ENCODE measurements at regions of chr1 and their contacts with region 1.

Region 1: GRCh38 chr1:210400043-210400840 is 71.5 kb downstream of the HHAT start:
- DNase-seq: peak; percentile 76
- ATAC-seq: peak; percentile 79
- H3K4me3 Mint-ChIP-seq: no peak overlapping the region
- H3K27ac Mint-ChIP-seq: peak overlapping the region; percentile 94
- H3K4me1 Mint-ChIP-seq: peaks cover 44% of the 10 kb centered on the region
- H3K27me3 Mint-ChIP-seq: peaks cover 8% of the 10 kb centered on the region

Region 2: DNA sequence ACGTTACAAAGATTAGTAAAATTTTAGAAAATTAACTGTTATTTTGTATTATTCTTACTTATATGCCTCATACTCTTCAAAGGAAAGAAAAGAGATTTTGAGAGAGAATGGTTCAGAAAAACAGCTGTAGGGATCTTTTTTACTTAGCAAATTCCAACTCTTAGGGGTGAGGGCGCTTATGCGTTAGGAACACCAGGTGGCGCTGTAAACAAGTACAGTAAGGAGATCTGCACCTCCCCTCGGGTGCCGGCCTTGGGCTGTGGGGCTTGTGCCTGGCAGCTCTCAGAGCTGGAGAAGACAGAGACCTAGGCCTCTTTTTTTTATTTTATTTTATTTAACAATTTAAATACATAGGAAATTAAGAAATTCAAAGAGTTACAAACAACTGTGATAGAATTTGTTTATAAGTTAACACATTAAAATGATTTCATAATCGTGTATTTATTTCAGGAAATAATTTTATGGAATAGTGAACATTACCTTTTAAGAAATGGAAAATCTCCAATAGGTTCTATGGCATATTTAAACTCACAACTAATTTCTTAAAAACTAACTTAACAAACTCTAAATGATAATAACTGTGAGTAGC is 539.9 kb before region 1 on chr1:
- CTCF ChIA-PET with region 1: interaction called, 4 read pairs
- POLR2A ChIA-PET with region 1: no interaction called
- intact Hi-C with region 1: loop called (anchors 1 kb)
- DNase-seq: peak; percentile 86
- ATAC-seq: peak; percentile 95
- H3K4me3 Mint-ChIP-seq: no peak overlapping the region
- H3K27ac Mint-ChIP-seq: no peak overlapping the region
- H3K4me1 Mint-ChIP-seq: no peaks in the 10 kb centered on the region
- H3K27me3 Mint-ChIP-seq: peaks cover 4% of the 10 kb centered on the region

Region 3: GRCh38 chr1:210239349-210240111 is 160.7 kb before region 1 on chr1:
- CTCF ChIA-PET with region 1: no interaction called
- POLR2A ChIA-PET with region 1: no interaction called
- intact Hi-C with region 1: loop called in 1 of 2 experiments (anchors 5 kb)
- DNase-seq: no peak
- ATAC-seq: no peak
- H3K4me3 Mint-ChIP-seq: no peak overlapping the region
- H3K27ac Mint-ChIP-seq: no peak overlapping the region
- H3K4me1 Mint-ChIP-seq: peaks cover under 1% of the 10 kb centered on the region
- H3K27me3 Mint-ChIP-seq: peaks cover 63% of the 10 kb centered on the region

Region 4: DNA sequence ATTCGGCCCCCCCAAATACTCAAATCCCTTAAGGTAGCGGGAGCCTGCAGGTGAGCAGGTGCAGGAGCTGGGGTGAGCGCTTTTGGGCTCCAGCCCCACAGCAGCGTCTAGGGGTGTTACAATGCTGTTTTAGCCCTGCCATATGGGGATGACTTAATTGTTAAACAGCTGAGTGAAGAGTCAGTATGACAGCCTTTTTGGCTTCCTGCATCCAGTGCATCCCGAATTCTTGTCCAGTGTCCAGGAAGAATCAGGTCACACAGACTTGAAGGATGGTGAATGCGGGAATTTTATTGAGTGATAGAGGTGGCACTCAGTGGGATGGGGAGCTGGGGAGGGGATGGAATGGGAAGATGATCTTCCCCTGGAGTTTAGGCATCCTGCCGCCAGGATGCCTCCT is 101.9 kb before region 1 on chr1:
- CTCF ChIA-PET with region 1: no interaction called
- POLR2A ChIA-PET with region 1: no interaction called
- intact Hi-C with region 1: no loop called
- DNase-seq: no peak
- ATAC-seq: no peak
- H3K4me3 Mint-ChIP-seq: no peak overlapping the region
- H3K27ac Mint-ChIP-seq: no peak overlapping the region
- H3K4me1 Mint-ChIP-seq: no peaks in the 10 kb centered on the region
- H3K27me3 Mint-ChIP-seq: peaks cover 32% of the 10 kb centered on the region

Region 5: GRCh38 chr1:210311726-210312493 is 88.3 kb before region 1 on chr1:
- CTCF ChIA-PET with region 1: no interaction called
- POLR2A ChIA-PET with region 1: no interaction called
- intact Hi-C with region 1: loop called in 1 of 2 experiments (anchors 1 kb)
- DNase-seq: no peak
- ATAC-seq: no peak
- H3K4me3 Mint-ChIP-seq: peak overlapping the region; percentile 68
- H3K27ac Mint-ChIP-seq: peak overlapping the region; percentile 10
- H3K4me1 Mint-ChIP-seq: peaks cover 6% of the 10 kb centered on the region
- H3K27me3 Mint-ChIP-seq: peaks cover 17% of the 10 kb centered on the region

Region 6: GRCh38 chr1:210342986-210343780 is 57.1 kb before region 1 on chr1:
- CTCF ChIA-PET with region 1: interaction called, 3 read pairs
- POLR2A ChIA-PET with region 1: no interaction called
- intact Hi-C with region 1: loop called (anchors 2 kb)
- DNase-seq: no peak
- ATAC-seq: peak; percentile 50
- H3K4me3 Mint-ChIP-seq: no peak overlapping the region
- H3K27ac Mint-ChIP-seq: no peak overlapping the region
- H3K4me1 Mint-ChIP-seq: peaks cover 37% of the 10 kb centered on the region
- H3K27me3 Mint-ChIP-seq: no peaks in the 10 kb centered on the region

Region 7: DNA sequence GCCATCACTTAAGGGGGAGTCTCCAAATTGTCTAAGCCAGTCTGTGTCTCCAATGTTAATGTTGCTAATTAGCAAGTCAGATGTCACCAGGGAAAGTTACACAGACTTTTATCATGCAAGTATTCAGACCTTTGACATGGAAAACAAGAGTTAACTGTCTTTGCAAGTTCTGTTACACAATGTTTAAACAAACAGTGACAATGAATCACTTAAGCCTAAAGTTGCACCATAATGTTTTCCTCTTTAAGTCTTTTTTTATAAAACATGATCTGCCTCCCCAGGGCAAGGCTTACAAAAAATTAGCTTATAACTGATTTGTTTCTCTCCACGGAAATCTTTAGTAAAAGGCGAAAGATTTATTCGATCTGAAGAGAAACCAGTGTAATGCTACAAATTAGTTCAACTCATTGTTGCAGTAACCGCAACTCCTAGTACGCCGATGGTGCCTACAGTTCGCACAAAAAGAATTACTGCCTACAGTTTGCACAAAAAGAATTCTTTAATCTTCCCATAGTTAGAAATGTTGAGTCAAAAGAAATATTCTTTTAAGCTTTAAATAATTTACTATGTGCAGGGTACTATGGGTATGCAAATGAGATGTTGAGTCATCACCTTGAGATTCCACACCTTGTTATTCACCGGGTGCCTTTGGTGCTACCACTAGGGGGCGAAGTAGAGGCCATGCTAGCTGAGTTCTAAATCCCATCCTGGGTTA is 26.2 kb before region 1 on chr1:
- CTCF ChIA-PET with region 1: interaction called, 44 read pairs
- POLR2A ChIA-PET with region 1: interaction called, 21 read pairs
- intact Hi-C with region 1: loop called (anchors 1 kb)
- DNase-seq: peak; percentile 90
- ATAC-seq: peak; percentile 82
- H3K4me3 Mint-ChIP-seq: no peak overlapping the region
- H3K27ac Mint-ChIP-seq: peak overlapping the region; percentile 82
- H3K4me1 Mint-ChIP-seq: peaks cover 27% of the 10 kb centered on the region
- H3K27me3 Mint-ChIP-seq: no peaks in the 10 kb centered on the region